PC-9 (cell line): ENCODE measurements at regions of chr14 and their contacts with region 1.

Region 1: DNA sequence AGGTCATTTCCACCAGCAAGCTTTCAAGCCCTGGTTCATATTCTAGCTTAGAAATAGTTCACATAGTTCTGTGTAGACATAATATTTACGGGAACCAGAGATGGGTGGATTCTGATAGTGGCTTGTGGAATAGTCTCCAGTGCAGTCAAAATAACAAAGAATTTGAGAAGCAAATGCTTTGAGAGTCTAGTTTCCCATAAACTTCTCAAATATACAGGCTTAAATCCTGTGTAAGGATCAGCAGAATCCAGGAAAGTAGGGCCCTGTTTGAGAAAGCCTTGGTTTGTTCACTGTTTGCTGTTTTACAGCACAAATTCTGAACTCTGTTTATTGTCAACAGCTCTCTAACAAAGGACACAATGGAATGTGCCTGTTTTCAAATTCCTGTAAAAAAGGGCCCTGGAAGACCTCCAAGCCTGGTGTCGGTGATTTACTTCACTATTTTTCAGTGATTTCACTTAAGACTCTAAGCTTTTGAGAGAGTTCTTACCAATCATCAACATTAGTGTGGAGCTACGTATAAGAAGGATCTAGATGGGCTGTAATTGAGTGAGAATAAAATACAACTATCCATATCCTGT is 11.4 kb upstream of the FOS start:
- DNase-seq: no peak
- H3K4me3 ChIP-seq: no peak overlapping the region
- H3K27ac ChIP-seq: no peak overlapping the region
- H3K4me1 ChIP-seq: peaks cover 21% of the 10 kb centered on the region
- H3K27me3 ChIP-seq: no peaks in the 10 kb centered on the region
- CTCF ChIP-seq: no peak

Region 2: GRCh38 chr14:75147423-75148071 is 119.7 kb before region 1 on chr14:
- CTCF ChIA-PET with region 1: no interaction called
- POLR2A ChIA-PET with region 1: no interaction called
- intact Hi-C with region 1: no loop called
- DNase-seq: no peak
- H3K4me3 ChIP-seq: no peak overlapping the region
- H3K27ac ChIP-seq: no peak overlapping the region
- H3K4me1 ChIP-seq: no peaks in the 10 kb centered on the region
- H3K27me3 ChIP-seq: no peaks in the 10 kb centered on the region
- CTCF ChIP-seq: no peak

Region 3: GRCh38 chr14:75158843-75159614 is 108.2 kb before region 1 on chr14:
- CTCF ChIA-PET with region 1: no interaction called
- POLR2A ChIA-PET with region 1: interaction called, 14 read pairs
- intact Hi-C with region 1: no loop called
- DNase-seq: no peak
- H3K4me3 ChIP-seq: no peak overlapping the region
- H3K27ac ChIP-seq: peak overlapping the region; percentile 35
- H3K4me1 ChIP-seq: peaks cover 25% of the 10 kb centered on the region
- H3K27me3 ChIP-seq: no peaks in the 10 kb centered on the region
- CTCF ChIP-seq: no peak

Region 4: GRCh38 chr14:75230140-75231045 is 36.8 kb before region 1 on chr14:
- CTCF ChIA-PET with region 1: interaction called, 10 read pairs
- POLR2A ChIA-PET with region 1: interaction called, 7 read pairs
- intact Hi-C with region 1: no loop called
- DNase-seq: peak; percentile 92 to 97
- H3K4me3 ChIP-seq: no peak overlapping the region; the same call in 1 of the 2 replicates
- H3K27ac ChIP-seq: peak overlapping the region; percentile 89
- H3K4me1 ChIP-seq: peaks cover 90% of the 10 kb centered on the region
- H3K27me3 ChIP-seq: no peaks in the 10 kb centered on the region
- CTCF ChIP-seq: peak; percentile 90

Region 5: DNA sequence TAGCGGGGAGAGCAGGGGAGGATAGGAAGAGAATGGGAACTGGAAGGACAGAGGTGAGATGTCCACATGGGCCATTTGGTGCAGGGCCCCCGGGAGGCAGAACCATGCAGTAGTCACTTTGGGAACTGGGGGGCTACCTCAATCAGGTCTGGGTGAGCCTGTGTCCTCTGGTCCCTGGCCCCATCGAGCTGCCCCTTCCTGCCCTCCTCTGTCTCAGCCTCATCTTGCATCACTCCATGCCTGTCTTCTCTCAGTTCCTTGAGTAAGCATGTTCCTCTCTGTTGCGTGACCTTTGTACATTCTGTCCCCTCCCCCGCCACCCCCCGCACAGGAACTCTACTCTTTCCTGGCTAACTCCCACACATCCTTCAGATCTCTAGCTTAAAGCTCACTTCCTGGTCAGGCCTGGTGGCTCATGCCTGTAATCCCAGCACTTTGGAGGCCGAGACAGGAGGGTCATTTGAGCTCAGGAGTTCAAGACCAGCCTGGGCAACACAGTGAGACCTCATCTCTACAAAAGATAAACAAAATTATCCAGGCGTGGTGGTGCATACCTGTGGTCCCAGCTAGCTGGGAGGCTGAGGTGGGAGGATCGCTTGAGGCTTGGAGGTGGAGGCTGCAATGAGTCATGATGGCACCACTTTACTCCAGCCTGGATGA is 34.6 kb after region 1 on chr14:
- CTCF ChIA-PET with region 1: interaction called, 8 read pairs
- POLR2A ChIA-PET with region 1: interaction called, 13 read pairs
- intact Hi-C with region 1: no loop called
- DNase-seq: no peak
- H3K4me3 ChIP-seq: no peak overlapping the region
- H3K27ac ChIP-seq: no peak overlapping the region
- H3K4me1 ChIP-seq: peaks cover 22% of the 10 kb centered on the region
- H3K27me3 ChIP-seq: no peaks in the 10 kb centered on the region
- CTCF ChIP-seq: no peak

Region 6: GRCh38 chr14:75372260-75372659 is 105.0 kb after region 1 on chr14:
- CTCF ChIA-PET with region 1: no interaction called
- POLR2A ChIA-PET with region 1: no interaction called
- intact Hi-C with region 1: no loop called
- DNase-seq: no peak
- H3K4me3 ChIP-seq: no peak overlapping the region
- H3K27ac ChIP-seq: no peak overlapping the region
- H3K4me1 ChIP-seq: no peaks in the 10 kb centered on the region
- H3K27me3 ChIP-seq: peaks cover 16% of the 10 kb centered on the region; the same call in 1 of the 2 replicates
- CTCF ChIP-seq: no peak

Region 7: GRCh38 chr14:77033622-77034521 is 1766.6 kb after region 1 on chr14:
- CTCF ChIA-PET with region 1: no interaction called
- POLR2A ChIA-PET with region 1: interaction called, 10 read pairs
- intact Hi-C with region 1: no loop called
- DNase-seq: peak; percentile 94
- H3K4me3 ChIP-seq: peak overlapping the region; percentile 56
- H3K27ac ChIP-seq: peak overlapping the region; percentile 93
- H3K4me1 ChIP-seq: peaks cover 92% of the 10 kb centered on the region
- H3K27me3 ChIP-seq: no peaks in the 10 kb centered on the region
- CTCF ChIP-seq: peak; percentile 17; the same call in 1 of the 2 replicates